ENCODE measurements at regions of chr3 and their contacts with region 1.

Region 1: DNA sequence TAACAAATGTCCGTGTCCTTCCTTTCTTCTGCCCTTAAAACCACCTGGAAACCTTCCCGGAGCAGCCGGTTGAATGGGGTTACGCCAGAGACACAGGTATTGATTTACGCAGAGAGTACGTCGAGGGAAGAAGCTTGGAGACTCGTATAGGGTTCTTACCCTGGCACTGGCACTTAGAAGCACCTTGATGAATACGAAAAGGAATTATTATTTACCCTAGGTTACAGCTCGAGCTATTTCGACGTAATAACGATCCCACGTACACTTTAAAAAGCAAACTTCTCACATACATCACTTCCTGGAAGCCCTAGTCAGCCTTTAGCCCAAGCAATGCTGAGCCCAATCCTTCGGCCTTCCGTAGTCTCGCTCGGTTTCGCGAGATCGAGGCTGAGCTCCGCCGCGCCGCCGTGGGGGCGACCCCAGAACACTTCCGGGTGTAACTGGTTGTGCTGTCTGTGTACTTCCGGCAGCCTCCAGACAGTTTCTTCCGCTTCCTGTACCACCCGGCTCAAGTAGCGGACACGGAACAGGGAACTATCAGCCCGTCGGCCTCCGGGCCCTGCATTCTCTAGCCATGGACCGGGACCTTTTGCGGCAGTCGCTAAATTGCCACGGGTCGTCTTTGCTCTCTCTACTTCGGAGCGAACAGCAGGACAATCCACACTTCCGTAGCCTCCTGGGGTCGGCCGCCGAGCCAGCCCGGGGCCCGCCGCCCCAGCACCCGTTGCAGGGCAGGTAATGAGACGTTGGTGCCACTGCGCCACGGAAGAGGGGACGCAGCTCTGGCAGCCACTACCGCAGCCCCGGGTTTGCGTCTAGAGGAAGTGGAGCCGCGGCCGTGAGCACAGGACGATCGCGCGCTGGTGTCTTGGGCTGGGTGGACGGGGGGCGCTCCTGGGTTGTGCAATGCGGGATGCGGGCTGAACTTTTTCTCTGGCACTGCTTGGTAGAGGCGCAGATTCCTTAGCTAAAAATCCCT is at the start of gene TTC14:
- DNase-seq: peak; percentile 95
- H3K4me3 Mint-ChIP-seq: peak within 1 kb of the TSS; percentile 88
- H3K27ac Mint-ChIP-seq: peak within 1 kb of the TSS; percentile 88
- H3K4me1 Mint-ChIP-seq: peaks cover 15% of the 10 kb centered on the region
- H3K27me3 Mint-ChIP-seq: peaks cover 11% of the 10 kb centered on the region
- total RNA-seq, gene TTC14: 48.6 and 50.0 TPM in 2 replicates

Region 2: DNA sequence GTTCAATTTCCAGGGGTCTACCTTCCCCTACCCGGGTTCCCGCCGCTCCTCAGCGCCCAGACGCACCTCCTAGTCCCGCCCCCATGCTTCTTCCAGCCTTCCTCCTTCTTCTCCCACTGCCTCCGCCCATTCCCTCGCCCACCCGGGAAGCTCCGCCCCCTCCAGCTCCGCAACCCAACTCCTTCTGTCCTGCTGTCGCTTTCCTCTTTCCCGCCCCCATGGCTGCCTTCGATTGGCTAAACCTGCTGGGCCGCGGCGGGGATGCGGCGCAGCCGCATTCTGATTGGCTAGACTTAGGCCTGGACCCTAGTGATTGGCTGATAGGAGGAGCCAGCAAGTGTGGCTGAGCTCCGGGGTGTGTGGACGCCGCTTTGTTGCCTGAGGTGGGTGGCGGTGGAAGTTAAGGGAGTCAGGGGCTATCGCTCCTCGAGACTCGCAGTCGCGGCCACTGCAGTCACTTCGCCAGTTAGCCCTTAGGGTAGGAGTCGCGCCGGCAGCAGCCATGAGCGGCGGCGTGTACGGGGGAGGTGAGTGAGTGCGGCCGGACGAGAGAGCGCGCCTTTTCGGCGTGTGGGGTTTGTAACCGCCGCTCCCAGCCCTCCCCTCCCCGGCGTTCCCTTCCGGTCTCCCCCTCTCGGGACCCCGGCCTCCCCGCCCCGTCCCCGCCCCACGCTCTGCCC is 1039.2 kb before region 1 on chr3 and contains the start of gene ACTL6A:
- intact Hi-C with region 1: loop called (anchors 5 kb)
- DNase-seq: peak; percentile 98
- H3K4me3 Mint-ChIP-seq: peak within 1 kb of the TSS; percentile 98
- H3K27ac Mint-ChIP-seq: peak within 1 kb of the TSS; percentile 98
- H3K4me1 Mint-ChIP-seq: peaks cover 30% of the 10 kb centered on the region
- H3K27me3 Mint-ChIP-seq: peaks cover 14% of the 10 kb centered on the region
- total RNA-seq, gene ACTL6A: 114 and 121 TPM in 2 replicates

Region 3: DNA sequence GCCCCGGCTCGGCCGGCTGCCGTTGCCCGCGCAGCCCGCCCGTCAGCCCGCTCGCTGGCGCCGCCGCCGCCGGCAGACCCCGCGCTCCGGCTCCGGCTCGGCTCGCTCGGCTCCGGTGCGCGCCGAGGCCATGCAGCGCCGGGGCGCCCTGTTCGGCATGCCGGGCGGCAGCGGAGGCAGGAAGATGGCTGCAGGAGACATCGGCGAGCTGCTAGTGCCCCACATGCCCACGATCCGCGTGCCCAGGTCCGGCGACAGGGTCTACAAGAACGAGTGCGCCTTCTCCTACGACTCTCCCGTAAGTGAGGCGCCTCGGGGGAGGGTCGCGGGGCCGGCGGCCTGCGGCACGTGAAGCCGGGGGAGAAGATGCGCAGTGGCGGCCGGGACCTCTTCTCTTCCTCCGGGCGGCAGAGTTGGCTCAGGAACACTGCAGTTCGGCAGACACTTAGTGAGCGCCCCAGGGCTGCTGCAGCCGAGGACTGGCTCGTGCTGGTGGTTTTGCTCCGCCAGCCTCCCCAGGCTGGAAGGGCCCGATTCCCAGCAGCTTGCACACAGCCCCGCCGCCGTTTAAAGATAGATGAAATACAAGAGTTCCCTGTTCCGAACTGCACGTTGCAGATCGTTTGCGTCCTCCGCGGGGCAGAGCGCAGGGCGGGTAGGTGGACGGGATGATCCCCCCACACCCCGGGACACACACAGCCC is 948.7 kb before region 1 on chr3:
- intact Hi-C with region 1: loop called (anchors 1 kb)
- DNase-seq: peak; percentile 58
- H3K4me3 Mint-ChIP-seq: peak overlapping the region; percentile 94
- H3K27ac Mint-ChIP-seq: peak overlapping the region; percentile 83
- H3K4me1 Mint-ChIP-seq: peaks cover 26% of the 10 kb centered on the region
- H3K27me3 Mint-ChIP-seq: peaks cover 10% of the 10 kb centered on the region

Region 4: GRCh38 chr3:180250169-180250568 is 351.8 kb before region 1 on chr3:
- intact Hi-C with region 1: no loop called
- DNase-seq: no peak
- H3K4me3 Mint-ChIP-seq: no peak overlapping the region
- H3K27ac Mint-ChIP-seq: no peak overlapping the region
- H3K4me1 Mint-ChIP-seq: no peaks in the 10 kb centered on the region
- H3K27me3 Mint-ChIP-seq: no peaks in the 10 kb centered on the region

Region 5: DNA sequence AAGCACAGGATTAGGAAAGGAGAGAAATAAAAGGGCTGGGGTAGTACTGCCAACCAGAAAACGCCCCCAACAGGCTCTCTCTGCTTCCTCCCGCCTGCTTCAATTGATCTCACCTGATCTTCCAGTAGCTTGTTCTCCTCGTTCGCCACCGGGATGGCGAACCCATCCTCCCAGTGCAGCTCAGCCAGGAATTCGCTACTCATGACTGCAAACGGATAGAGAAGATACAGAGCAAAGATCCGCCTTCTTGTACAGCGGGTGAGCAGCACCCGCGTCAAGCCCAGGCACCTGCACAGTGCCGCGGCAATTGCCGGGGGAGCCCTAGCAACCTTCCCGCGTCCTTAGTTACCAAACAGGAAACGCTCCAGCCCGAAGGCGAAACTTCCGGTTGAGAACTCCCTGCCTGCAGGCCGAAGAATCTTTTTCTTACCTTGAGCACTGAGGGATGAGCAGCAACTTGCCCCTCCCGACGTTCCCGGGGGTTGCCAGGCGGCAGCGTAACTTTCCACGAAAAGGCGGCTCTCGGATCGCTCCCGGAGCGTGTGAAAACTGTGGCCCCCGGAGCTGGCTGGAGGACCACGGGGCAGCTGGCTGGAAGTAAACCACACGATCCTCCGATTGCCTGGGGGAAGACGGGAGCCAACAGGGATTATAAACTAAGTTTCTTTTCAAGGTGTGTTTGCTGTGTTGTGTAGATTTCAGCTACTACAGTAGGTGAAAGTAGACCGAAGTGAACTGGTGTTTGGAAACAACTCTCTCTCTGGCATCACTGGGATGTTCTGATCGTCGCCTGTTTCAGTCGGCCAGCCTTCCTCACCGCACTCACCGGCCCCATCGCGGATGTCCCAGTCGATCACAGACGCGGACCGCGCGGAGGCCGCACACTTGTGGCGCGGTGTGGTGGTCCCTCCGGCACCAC is 77.5 kb after region 1 on chr3 and contains the start of gene CCDC39:
- intact Hi-C with region 1: loop called (anchors 1 kb)
- DNase-seq: peak; percentile 45
- H3K4me3 Mint-ChIP-seq: peak within 1 kb of the TSS; percentile 83
- H3K27ac Mint-ChIP-seq: no peak within 1 kb of the TSS
- H3K4me1 Mint-ChIP-seq: peaks cover 8% of the 10 kb centered on the region
- H3K27me3 Mint-ChIP-seq: peaks cover 44% of the 10 kb centered on the region
- total RNA-seq, gene CCDC39: not detected in 2 replicates

Region 6: GRCh38 chr3:180989291-180990163 is 387.6 kb after region 1 on chr3 and contains the start of gene DNAJC19:
- intact Hi-C with region 1: loop called (anchors 1 kb)
- DNase-seq: peak; percentile 88
- H3K4me3 Mint-ChIP-seq: peak within 1 kb of the TSS; percentile 100
- H3K27ac Mint-ChIP-seq: peak within 1 kb of the TSS; percentile 96
- H3K4me1 Mint-ChIP-seq: peaks cover 14% of the 10 kb centered on the region
- H3K27me3 Mint-ChIP-seq: peaks cover 9% of the 10 kb centered on the region
- total RNA-seq, gene DNAJC19: 48.5 and 62.2 TPM in 2 replicates